Body of pancreas (tissue), 4 donors: ENCODE measurements at regions of chr1 and their contacts with region 1.

Region 1: DNA sequence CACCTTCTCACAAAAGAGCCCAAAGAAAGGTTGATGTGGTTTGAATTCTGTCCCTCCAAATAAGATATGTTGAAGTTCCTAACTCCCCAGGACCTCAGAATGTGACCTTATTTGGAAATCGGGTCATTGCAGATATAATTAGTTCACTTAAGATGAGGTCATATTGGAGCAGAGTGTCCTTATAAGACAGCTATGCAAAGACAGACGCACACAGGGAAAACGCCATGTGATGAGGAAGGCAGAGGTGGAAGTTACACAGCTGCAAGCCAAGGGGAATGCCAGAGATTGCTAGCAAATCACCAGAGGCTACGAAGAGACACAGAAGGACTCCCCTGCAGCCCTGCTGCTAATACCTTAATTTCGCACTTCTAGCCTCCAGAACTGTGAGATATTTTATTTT is 5.2 kb upstream of the ABCB10 start:
- DNase-seq: peak; percentile 33 to 69 (median 52)
- ATAC-seq: peak; percentile 17
- H3K4me3 ChIP-seq: no peak overlapping the region
- H3K27ac ChIP-seq: peak overlapping the region in 1 of 4 donors; percentile 11
- H3K4me1 ChIP-seq: peaks cover 12% of the 10 kb centered on the region
- H3K27me3 ChIP-seq: no peaks in the 10 kb centered on the region
- CTCF ChIP-seq: no peak
- POLR2A ChIP-seq: peak in 1 of 3 donors; percentile 13

Region 2: GRCh38 chr1:229625915-229626831 is 62.5 kb after region 1 on chr1 and contains the starts of genes TAF5L and URB2:
- intact Hi-C with region 1: loop called (anchors 10 kb)
- DNase-seq: peak; percentile 86 to 91 (median 89)
- ATAC-seq: peak; percentile 96
- H3K4me3 ChIP-seq: peak within 1 kb of the TSS; percentile 92 to 99
- H3K27ac ChIP-seq: peak within 1 kb of the TSS; percentile 82 to 94 (median 86)
- H3K4me1 ChIP-seq: peaks cover 28% of the 10 kb centered on the region
- H3K27me3 ChIP-seq: no peaks in the 10 kb centered on the region
- CTCF ChIP-seq: peak in 1 of 7 experiments; percentile 26
- POLR2A ChIP-seq: peak; percentile 47 to 60 (median 53)
- total RNA-seq, gene TAF5L: 4.6 to 6.2 TPM
- total RNA-seq, gene URB2: 4.2 to 8.2 TPM